ENCODE measurements at regions of chr6 and their contacts with region 1.

Region 1: GRCh38 chr6:116030770-116031169 is 29.9 kb downstream of the FRK start:
- DNase-seq: no peak
- ATAC-seq: no peak
- H3K4me3 ChIP-seq: no peak overlapping the region
- H3K27ac ChIP-seq: no peak overlapping the region
- H3K4me1 ChIP-seq: peaks cover 9% of the 10 kb centered on the region
- H3K27me3 ChIP-seq: no peaks in the 10 kb centered on the region
- CTCF ChIP-seq: no peak
- EP300 ChIP-seq: no peak
- POLR2A ChIP-seq: no peak
- RAD21 ChIP-seq: no peak

Region 2: GRCh38 chr6:116016846-116017545 is 13.8 kb before region 1 on chr6:
- CTCF ChIA-PET with region 1: interaction called, 9 read pairs
- POLR2A ChIA-PET with region 1: interaction called, 4 read pairs
- RAD21 ChIA-PET with region 1: interaction called, 5 read pairs
- SMC1A ChIA-PET with region 1: interaction called, 17 read pairs
- in situ Hi-C with region 1: no loop called
- intact Hi-C with region 1: no loop called
- DNase-seq: no peak
- ATAC-seq: peak; percentile 27
- H3K4me3 ChIP-seq: peak overlapping the region; percentile 39; the same call in 1 of the 2 replicates
- H3K27ac ChIP-seq: peak overlapping the region; percentile 90
- H3K4me1 ChIP-seq: peaks cover 69% of the 10 kb centered on the region
- H3K27me3 ChIP-seq: no peaks in the 10 kb centered on the region
- CTCF ChIP-seq: no peak
- EP300 ChIP-seq: no peak
- POLR2A ChIP-seq: no peak
- RAD21 ChIP-seq: no peak

Region 3: GRCh38 chr6:116279260-116280063 is 248.7 kb after region 1 on chr6 and contains the start of gene TSPYL1:
- CTCF ChIA-PET with region 1: no interaction called
- POLR2A ChIA-PET with region 1: no interaction called
- RAD21 ChIA-PET with region 1: no interaction called
- SMC1A ChIA-PET with region 1: no interaction called
- in situ Hi-C with region 1: no loop called
- intact Hi-C with region 1: no loop called
- DNase-seq: peak; percentile 90
- ATAC-seq: peak; percentile 94
- H3K4me3 ChIP-seq: peak within 1 kb of the TSS; percentile 86
- H3K27ac ChIP-seq: peak within 1 kb of the TSS; percentile 96
- H3K4me1 ChIP-seq: no peaks in the 10 kb centered on the region
- H3K27me3 ChIP-seq: no peaks in the 10 kb centered on the region
- CTCF ChIP-seq: peak in 2 of 3 experiments; percentile 16 to 18; a peak in 1 of 6 replicates
- EP300 ChIP-seq: 0 out of 4 replicates have a peak, but pooled peaks of 1 of the 2 experiments have one; percentile 33
- POLR2A ChIP-seq: peak; percentile 94
- RAD21 ChIP-seq: no peak
- polyA plus RNA-seq, gene TSPYL1: 22.9 to 29.9 TPM